ENCODE measurements at regions of chr21 and their contacts with region 1.

Region 1: DNA sequence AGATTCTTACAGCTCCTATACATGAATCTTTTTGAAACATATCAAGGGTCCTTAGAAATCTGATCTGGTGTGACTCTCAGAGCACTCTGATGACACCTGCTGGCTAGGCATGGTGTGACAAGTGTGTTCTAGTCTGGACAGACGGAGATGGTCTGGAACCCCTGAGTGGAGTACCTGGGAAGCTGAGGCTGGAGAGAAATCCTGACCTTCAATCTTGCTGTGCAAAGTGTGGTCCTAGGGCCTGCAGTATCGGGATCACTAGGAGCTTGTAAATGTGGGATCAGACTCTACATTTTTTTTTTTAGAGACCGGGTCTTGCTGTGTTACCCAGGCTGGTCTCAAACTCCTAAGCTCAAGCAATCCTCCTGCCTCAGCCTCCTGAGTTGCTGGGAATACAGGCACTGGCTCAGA is 78.6 kb upstream of the SOD1 start:
- H3K4me3 ChIP-seq: no peak overlapping the region
- H3K27ac ChIP-seq: no peak overlapping the region
- H3K4me1 ChIP-seq: no peaks in the 10 kb centered on the region
- CTCF ChIP-seq: peak; percentile 57; the same call in 1 of the 2 replicates

Region 2: DNA sequence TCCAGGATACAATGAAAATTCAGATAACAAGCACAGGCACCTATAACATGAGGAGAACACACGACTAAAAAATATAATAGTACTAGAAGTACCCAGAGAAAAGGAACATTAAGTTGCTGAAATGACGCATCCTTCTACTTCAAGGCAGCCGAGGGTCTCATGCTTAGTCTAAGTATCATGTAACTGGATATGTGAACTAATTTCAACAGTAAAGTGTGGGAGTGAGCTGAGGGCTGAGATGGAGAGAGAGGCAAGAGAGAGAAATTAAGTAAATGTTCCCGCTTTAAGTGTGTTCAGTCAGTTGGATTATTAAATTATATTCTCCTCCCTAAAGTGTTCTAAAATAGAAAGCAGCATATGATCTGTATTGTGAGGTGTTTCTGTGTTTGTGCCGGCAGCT is 390.4 kb before region 1 on chr21:
- CTCF ChIA-PET with region 1: interaction called, 161 read pairs
- POLR2A ChIA-PET with region 1: no interaction called
- H3K4me3 ChIP-seq: no peak overlapping the region
- H3K27ac ChIP-seq: no peak overlapping the region
- H3K4me1 ChIP-seq: peaks cover 8% of the 10 kb centered on the region; the same call in 1 of the 2 replicates
- CTCF ChIP-seq: no peak

Region 3: GRCh38 chr21:31343680-31344480 is 237.0 kb before region 1 on chr21 and contains the start of gene TIAM1:
- CTCF ChIA-PET with region 1: interaction called, 39 read pairs
- POLR2A ChIA-PET with region 1: no interaction called
- H3K4me3 ChIP-seq: peak within 1 kb of the TSS; percentile 63
- H3K27ac ChIP-seq: peak within 1 kb of the TSS; percentile 7; the same call in 1 of the 2 replicates
- H3K4me1 ChIP-seq: peaks cover 13% of the 10 kb centered on the region; the same call in 1 of the 2 replicates
- CTCF ChIP-seq: no peak

Region 4: GRCh38 chr21:31476263-31477022 is 104.4 kb before region 1 on chr21:
- CTCF ChIA-PET with region 1: interaction called, 10 read pairs
- POLR2A ChIA-PET with region 1: no interaction called
- H3K4me3 ChIP-seq: no peak overlapping the region
- H3K27ac ChIP-seq: no peak overlapping the region
- H3K4me1 ChIP-seq: no peaks in the 10 kb centered on the region
- CTCF ChIP-seq: no peak

Region 5: DNA sequence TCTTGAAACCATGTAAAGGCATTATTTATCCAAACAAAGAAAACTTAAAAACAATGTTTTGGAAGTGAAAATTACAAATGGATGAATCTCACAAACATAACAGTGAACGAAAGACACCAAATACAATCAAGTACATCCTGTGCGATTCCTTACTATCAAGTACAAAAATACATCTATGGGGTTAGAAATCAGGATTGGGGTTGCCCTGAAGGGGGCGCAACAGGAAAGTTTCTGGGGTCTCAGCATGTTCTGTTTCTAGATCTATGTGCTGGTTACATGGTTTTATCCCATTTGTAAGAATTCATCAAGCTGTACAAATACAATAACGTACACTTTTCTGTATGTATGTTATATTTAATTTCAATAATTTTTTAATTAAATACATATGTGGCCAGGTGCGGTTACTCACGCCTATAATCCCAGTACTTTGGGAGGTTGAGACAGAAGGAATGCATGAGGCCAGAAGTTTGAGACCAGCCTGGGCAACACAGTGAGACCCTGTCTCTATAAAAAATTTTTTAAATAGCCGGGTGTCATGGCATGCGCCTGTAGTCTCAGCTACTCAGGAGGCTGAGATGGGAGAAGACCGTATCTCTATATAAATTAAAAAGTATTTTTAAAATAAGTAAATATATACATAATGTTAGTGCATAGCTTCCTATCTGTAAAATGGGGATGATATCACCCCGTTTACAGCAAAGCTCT is 42.8 kb before region 1 on chr21:
- CTCF ChIA-PET with region 1: interaction called, 23 read pairs
- POLR2A ChIA-PET with region 1: no interaction called
- H3K4me3 ChIP-seq: no peak overlapping the region
- H3K27ac ChIP-seq: no peak overlapping the region
- H3K4me1 ChIP-seq: peaks cover 3% of the 10 kb centered on the region
- CTCF ChIP-seq: no peak

Region 6: DNA sequence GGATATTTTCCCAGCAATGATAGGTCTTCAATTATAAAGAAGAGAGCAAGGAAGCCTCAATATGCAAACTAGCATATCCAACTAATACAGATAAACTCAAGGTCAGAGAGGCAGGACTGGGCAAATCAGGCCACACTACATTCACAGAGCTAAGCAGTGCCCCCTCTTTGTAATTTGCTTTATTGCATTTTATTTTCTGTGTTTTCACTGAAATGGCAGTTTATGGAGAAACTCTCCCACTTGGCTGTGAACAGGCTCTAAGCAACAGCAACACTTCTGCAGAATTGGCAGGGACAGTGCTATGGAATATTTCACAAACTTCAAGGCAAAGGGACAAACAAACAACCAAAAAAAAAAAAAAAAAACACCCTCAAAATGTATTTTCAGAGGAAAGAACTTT is 14.8 kb before region 1 on chr21:
- CTCF ChIA-PET with region 1: interaction called, 18 read pairs
- POLR2A ChIA-PET with region 1: interaction called, 7 read pairs
- H3K4me3 ChIP-seq: no peak overlapping the region
- H3K27ac ChIP-seq: no peak overlapping the region
- H3K4me1 ChIP-seq: no peaks in the 10 kb centered on the region
- CTCF ChIP-seq: no peak

Measured in HEK293 (cell line).